Calu3 (cell line): ENCODE measurements at regions of chr7 and their contacts with region 1.

Region 1: DNA sequence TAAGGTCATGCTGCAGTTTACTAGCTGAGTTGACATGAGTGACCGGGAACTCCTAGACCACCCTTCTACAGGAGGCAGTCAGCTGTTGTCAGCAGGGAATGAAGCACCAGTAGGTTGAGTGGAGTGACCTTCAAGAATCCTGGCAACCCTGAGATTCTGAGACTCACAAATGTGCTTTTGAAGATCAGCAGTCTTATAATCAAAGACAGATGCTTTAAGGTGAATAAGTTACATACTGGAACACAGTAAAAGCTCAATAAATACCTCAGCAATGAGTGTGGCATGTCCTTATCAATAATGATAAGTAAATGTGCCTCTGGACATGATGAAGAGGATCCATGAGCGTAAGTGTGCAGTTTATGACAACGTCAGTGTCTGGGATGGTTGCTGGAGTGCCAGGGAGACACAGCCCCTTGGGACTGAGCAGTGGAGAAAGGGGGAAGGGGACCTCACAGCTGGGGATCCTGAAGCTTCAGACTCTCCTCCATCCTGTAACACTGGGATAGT is 11.9 kb upstream of the OR6V1 start:
- DNase-seq: no peak
- H3K4me3 Mint-ChIP-seq: no peak overlapping the region
- H3K27ac Mint-ChIP-seq: no peak overlapping the region
- H3K4me1 Mint-ChIP-seq: peaks cover 11% of the 10 kb centered on the region
- H3K27me3 Mint-ChIP-seq: peaks cover 17% of the 10 kb centered on the region
- CTCF ChIP-seq: no peak

Region 2: DNA sequence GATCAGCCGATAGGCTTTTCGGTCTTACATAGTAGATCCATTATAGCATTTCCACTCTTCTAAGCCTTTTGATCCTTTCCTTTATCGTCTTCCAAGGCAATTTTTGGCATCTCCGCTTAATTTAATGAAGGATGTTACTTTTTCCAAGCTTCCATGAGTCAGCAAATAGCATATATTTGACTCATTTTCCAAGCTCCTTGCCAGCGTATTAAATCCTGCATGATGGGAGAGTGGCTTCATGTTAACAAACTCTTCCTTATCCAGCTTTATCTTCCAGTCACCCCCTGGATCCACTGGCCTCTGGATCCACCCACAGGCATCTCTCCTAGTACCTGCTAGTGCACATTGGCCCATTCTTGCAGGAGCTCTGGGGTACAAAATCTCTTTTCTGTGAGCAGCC is 26.4 kb before region 1 on chr7:
- CTCF ChIA-PET with region 1: no interaction called
- intact Hi-C with region 1: loop called (anchors 2 kb)
- DNase-seq: no peak
- H3K4me3 Mint-ChIP-seq: no peak overlapping the region
- H3K27ac Mint-ChIP-seq: no peak overlapping the region
- H3K4me1 Mint-ChIP-seq: no peaks in the 10 kb centered on the region
- H3K27me3 Mint-ChIP-seq: peaks cover 65% of the 10 kb centered on the region
- CTCF ChIP-seq: no peak